HEK293 (cell line): ENCODE measurements at regions of chr2 and their contacts with region 1.

Region 1: GRCh38 chr2:112941753-112942658 is 31.0 kb downstream of the IL37 start:
- H3K4me3 ChIP-seq: no peak overlapping the region
- H3K27ac ChIP-seq: no peak overlapping the region
- H3K4me1 ChIP-seq: no peaks in the 10 kb centered on the region
- CTCF ChIP-seq: peak; percentile 71

Region 2: GRCh38 chr2:112626604-112627059 is 315.4 kb before region 1 on chr2:
- CTCF ChIA-PET with region 1: interaction called, 20 read pairs
- POLR2A ChIA-PET with region 1: no interaction called
- H3K4me3 ChIP-seq: no peak overlapping the region
- H3K27ac ChIP-seq: no peak overlapping the region
- H3K4me1 ChIP-seq: peaks cover 8% of the 10 kb centered on the region
- CTCF ChIP-seq: peak; percentile 91

Region 3: GRCh38 chr2:112749755-112750559 is 192.0 kb before region 1 on chr2:
- CTCF ChIA-PET with region 1: interaction called, 177 read pairs
- POLR2A ChIA-PET with region 1: interaction called, 7 read pairs
- H3K4me3 ChIP-seq: no peak overlapping the region
- H3K27ac ChIP-seq: no peak overlapping the region
- H3K4me1 ChIP-seq: peaks cover 16% of the 10 kb centered on the region
- CTCF ChIP-seq: peak; percentile 73

Region 4: GRCh38 chr2:112884869-112885505 is 57.0 kb before region 1 on chr2:
- CTCF ChIA-PET with region 1: interaction called, 35 read pairs
- POLR2A ChIA-PET with region 1: no interaction called
- H3K4me3 ChIP-seq: no peak overlapping the region
- H3K27ac ChIP-seq: no peak overlapping the region
- H3K4me1 ChIP-seq: peaks cover 2% of the 10 kb centered on the region; the same call in 1 of the 2 replicates
- CTCF ChIP-seq: peak; percentile 48

Region 5: DNA sequence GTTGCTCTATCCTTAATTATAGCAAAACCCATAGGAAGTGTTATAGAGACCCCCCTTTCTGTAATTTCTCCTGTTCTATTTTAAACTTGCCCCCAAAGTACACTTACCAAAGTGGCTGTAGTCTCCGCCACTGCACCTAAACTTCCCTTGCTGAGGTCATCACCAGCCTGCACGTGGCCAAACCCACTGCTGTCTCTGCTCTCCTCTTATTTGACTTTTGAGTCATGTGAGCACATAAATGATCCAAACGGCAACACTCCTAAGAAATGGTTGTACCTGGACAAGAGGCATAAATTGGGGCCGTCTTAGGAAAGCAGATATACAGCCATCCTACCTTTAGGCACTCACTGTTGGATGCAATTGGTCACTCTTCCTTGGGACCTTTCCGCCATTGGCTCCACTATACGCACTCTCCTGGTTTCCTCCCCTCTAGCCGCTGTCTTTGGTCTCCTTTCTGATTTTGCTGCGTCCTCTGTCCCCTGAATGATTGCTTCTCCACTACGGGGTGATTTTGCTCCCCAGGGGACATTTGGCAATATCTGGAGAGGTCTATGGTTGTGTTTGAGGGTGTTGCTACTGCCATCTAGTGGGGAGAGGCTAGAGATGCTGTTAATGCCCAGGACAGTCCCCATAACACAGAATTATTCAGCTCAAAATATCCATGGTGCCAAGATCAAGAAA is 16.6 kb after region 1 on chr2:
- CTCF ChIA-PET with region 1: interaction called, 53 read pairs
- POLR2A ChIA-PET with region 1: no interaction called
- H3K4me3 ChIP-seq: no peak overlapping the region
- H3K27ac ChIP-seq: no peak overlapping the region
- H3K4me1 ChIP-seq: no peaks in the 10 kb centered on the region
- CTCF ChIP-seq: no peak; the same call in 1 of the 2 replicates